ENCODE measurements at regions of chrX and their contacts with region 1.

Region 1: GRCh38 chrX:1453951-1454785 is 1.5 kb upstream of the ASMTL start:
- DNase-seq: peak; percentile 97
- H3K4me3 Mint-ChIP-seq: peak overlapping the region; percentile 69
- H3K27ac Mint-ChIP-seq: peak overlapping the region; percentile 67
- H3K4me1 Mint-ChIP-seq: peaks cover 16% of the 10 kb centered on the region
- H3K27me3 Mint-ChIP-seq: no peaks in the 10 kb centered on the region

Region 2: DNA sequence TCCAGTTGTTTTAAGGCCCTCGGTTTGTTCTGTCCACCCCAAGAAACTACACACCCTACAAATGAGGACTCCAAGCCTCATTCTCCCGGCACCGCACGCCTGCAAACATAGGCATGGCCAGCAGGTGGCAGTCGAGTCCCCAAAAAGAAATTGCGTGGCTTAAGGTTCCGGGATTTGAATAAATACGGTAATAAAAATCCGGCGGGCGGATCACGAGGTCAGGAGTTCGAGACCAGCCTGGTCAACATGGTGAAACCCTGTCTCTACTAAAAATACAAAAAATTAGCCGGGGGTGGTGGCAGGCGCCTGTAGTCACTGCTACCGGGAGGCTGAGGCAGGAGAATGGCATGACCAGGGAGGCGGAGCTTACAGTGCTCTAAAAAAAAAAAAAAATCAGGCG is 207.4 kb before region 1 on chrX:
- intact Hi-C with region 1: loop called (anchors 2 kb)
- DNase-seq: peak; percentile 96
- H3K4me3 Mint-ChIP-seq: peak overlapping the region; percentile 49
- H3K27ac Mint-ChIP-seq: peak overlapping the region; percentile 71
- H3K4me1 Mint-ChIP-seq: peaks cover 32% of the 10 kb centered on the region
- H3K27me3 Mint-ChIP-seq: no peaks in the 10 kb centered on the region

Region 3: DNA sequence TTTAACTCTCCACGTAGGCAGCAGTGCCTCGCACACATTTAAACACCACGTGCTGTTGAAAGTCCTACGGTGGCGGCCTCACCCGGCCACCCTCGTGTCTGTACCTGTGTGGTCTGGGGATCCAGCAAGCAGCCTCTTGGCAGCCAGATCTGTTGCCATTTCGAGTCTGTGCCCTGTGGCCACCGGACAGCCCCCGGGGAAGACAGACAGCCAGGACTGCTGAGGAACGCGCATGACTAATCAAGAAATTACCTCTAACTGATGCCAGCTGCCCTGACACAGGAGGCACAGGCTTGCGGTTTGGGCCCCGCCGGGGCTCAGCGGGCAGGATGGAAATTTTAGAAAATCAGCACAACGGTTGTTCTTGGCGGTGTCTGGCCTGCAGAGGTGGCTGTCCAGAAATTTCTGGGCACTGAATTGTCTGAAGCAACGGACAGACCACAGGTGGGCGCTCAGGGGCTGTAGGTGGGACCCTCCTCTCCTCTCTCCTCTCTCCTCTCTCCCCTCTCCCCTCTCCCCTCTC is 14.1 kb after region 1 on chrX:
- intact Hi-C with region 1: loop called (anchors 1 kb)
- DNase-seq: peak; percentile 90
- H3K4me3 Mint-ChIP-seq: peak overlapping the region; percentile 83
- H3K27ac Mint-ChIP-seq: peak overlapping the region; percentile 92
- H3K4me1 Mint-ChIP-seq: peaks cover 70% of the 10 kb centered on the region
- H3K27me3 Mint-ChIP-seq: no peaks in the 10 kb centered on the region

Region 4: GRCh38 chrX:1580735-1581531 is 126.8 kb after region 1 on chrX:
- intact Hi-C with region 1: loop called (anchors 1 kb)
- DNase-seq: peak; percentile 94
- H3K4me3 Mint-ChIP-seq: no peak overlapping the region
- H3K27ac Mint-ChIP-seq: no peak overlapping the region
- H3K4me1 Mint-ChIP-seq: peaks cover 17% of the 10 kb centered on the region
- H3K27me3 Mint-ChIP-seq: no peaks in the 10 kb centered on the region

Region 5: GRCh38 chrX:1657367-1658070 is 203.4 kb after region 1 on chrX:
- intact Hi-C with region 1: loop called (anchors 1 kb)
- DNase-seq: peak; percentile 86
- H3K4me3 Mint-ChIP-seq: peak overlapping the region; percentile 93
- H3K27ac Mint-ChIP-seq: peak overlapping the region; percentile 95
- H3K4me1 Mint-ChIP-seq: peaks cover 28% of the 10 kb centered on the region
- H3K27me3 Mint-ChIP-seq: no peaks in the 10 kb centered on the region

Region 6: GRCh38 chrX:2696698-2697215 is 1242.6 kb after region 1 on chrX:
- intact Hi-C with region 1: loop called (anchors 5 kb)
- DNase-seq: peak; percentile 89
- H3K4me3 Mint-ChIP-seq: peak overlapping the region; percentile 95
- H3K27ac Mint-ChIP-seq: peak overlapping the region; percentile 98
- H3K4me1 Mint-ChIP-seq: peaks cover 84% of the 10 kb centered on the region
- H3K27me3 Mint-ChIP-seq: no peaks in the 10 kb centered on the region

Measured in activated CD4-positive, alpha-beta T cell treated with anti-CD3 and anti-CD28 coated beads, Interleukin-2, amount 10 ng/mL, durations not matched to agents 24 days and 14 days (primary cell).